AG04450 (cell line): ENCODE measurements at regions of chr9 and their contacts with region 1.

Region 1: GRCh38 chr9:124537926-124538325 is 30.7 kb upstream of the NR5A1 start:
- DNase-seq: no peak
- H3K4me3 ChIP-seq: no peak overlapping the region
- H3K27ac ChIP-seq: no peak overlapping the region
- H3K27me3 ChIP-seq: peaks cover 10% of the 10 kb centered on the region
- CTCF ChIP-seq: no peak

Region 2: GRCh38 chr9:124415102-124415851 is 122.6 kb before region 1 on chr9 and contains the start of gene PSMB7:
- CTCF ChIA-PET with region 1: interaction called, 139 read pairs
- POLR2A ChIA-PET with region 1: interaction called, 8 read pairs
- DNase-seq: peak; percentile 91
- H3K4me3 ChIP-seq: peak within 1 kb of the TSS; percentile 97
- H3K27ac ChIP-seq: peak within 1 kb of the TSS; percentile 69
- H3K27me3 ChIP-seq: no peaks in the 10 kb centered on the region
- CTCF ChIP-seq: peak; percentile 83
- polyA plus RNA-seq, gene PSMB7: 382 and 396 TPM in 2 replicates

Region 3: GRCh38 chr9:124420991-124421543 is 116.9 kb before region 1 on chr9:
- CTCF ChIA-PET with region 1: interaction called, 139 read pairs
- POLR2A ChIA-PET with region 1: no interaction called
- DNase-seq: no peak
- H3K4me3 ChIP-seq: no peak overlapping the region
- H3K27ac ChIP-seq: no peak overlapping the region
- H3K27me3 ChIP-seq: peaks cover 8% of the 10 kb centered on the region
- CTCF ChIP-seq: no peak

Region 4: DNA sequence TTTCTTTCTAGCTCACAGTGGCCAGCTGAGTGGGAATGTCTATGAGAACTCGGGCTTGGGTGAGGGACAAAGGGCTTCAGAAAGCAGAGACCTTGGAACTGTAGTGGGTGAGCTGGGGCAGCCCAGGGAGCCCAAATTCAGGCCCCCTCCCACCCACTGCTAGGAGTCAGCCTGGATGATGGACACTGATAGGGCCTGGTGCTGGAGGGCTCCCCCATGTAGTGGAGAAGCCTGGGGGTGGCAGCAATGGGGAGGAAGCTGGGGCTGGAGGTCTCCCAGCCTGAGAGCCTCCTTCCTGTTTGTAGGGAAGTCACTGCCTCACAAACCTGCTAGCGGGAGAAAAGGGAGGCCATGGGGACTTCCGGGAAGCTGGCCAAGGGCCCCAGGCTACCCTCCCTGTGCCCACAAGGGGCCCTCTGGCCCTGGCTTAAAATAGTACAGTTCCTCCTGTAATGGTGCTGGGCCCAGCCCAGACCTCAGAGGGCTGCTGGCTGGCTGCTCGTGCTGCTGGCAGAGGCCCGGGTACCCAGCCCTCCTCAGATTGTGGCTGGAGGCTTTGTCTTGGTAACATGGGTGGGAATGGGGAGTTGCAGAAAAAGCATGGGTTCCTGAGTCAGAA is 24.4 kb before region 1 on chr9:
- CTCF ChIA-PET with region 1: interaction called, 11 read pairs
- POLR2A ChIA-PET with region 1: no interaction called
- DNase-seq: no peak
- H3K4me3 ChIP-seq: no peak overlapping the region
- H3K27ac ChIP-seq: no peak overlapping the region
- H3K27me3 ChIP-seq: peaks cover 48% of the 10 kb centered on the region
- CTCF ChIP-seq: no peak

Region 5: DNA sequence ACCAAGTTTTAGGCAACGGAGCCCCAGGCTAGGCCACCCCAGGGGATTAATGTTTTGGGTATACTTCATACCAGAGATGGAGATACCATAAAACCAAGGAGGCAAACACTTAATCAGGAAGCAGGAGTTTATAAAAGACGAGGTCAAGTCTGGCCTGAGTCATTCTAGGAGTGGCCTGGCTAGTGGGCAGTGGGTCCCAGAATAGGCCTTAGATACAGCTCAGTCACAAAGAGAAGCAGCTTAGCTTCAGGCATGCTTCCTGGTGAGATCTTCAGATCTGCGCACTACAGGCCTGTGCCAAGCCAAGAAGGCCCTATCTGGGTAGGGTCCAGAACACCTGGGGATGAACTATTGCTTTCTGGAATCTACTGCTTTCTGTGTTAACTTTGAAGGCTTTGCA is 10.1 kb before region 1 on chr9:
- CTCF ChIA-PET with region 1: interaction called, 87 read pairs
- POLR2A ChIA-PET with region 1: no interaction called
- DNase-seq: no peak
- H3K4me3 ChIP-seq: no peak overlapping the region
- H3K27ac ChIP-seq: no peak overlapping the region
- H3K27me3 ChIP-seq: peaks cover 3% of the 10 kb centered on the region
- CTCF ChIP-seq: no peak

Region 6: DNA sequence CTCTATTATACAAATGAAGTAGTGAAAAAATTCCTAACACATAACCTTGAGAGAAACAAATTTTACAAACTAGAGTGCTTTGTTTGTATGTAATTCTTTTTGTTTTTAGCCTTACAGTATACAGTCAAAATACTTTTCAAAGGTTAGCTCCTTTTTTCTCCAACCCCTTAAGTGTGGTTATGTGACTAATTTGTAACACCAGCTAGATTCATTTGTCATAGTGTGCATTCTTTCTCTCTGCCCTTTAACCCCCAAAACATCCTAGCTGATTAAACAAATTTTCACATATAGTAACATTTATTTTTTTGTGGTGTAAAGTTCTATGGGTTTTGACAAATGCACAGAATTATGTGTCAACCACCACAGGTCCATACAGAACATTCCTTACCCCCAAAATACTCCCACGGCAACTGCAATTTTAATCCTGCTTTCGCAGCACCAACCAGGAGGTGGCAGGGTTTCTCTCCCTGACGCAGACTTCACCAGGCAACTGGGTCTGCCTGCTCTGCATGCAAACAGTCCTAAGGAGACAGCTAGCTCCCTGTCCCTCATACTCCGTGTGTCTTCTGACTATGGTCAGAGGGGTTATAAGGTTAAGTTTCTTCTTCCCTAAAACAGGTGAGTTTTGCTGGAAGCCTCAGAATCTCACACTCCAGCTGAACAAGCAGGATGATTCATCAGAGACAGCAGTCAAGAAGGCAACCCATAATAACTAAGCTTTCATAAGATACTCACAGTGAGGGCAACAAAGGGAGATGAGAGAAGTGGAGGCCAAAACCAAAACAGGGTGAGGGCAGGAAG is 13.7 kb after region 1 on chr9:
- CTCF ChIA-PET with region 1: interaction called, 42 read pairs
- POLR2A ChIA-PET with region 1: no interaction called
- DNase-seq: peak; percentile 34
- H3K4me3 ChIP-seq: no peak overlapping the region
- H3K27ac ChIP-seq: no peak overlapping the region
- H3K27me3 ChIP-seq: peaks cover 6% of the 10 kb centered on the region
- CTCF ChIP-seq: peak; percentile 87

Region 7: DNA sequence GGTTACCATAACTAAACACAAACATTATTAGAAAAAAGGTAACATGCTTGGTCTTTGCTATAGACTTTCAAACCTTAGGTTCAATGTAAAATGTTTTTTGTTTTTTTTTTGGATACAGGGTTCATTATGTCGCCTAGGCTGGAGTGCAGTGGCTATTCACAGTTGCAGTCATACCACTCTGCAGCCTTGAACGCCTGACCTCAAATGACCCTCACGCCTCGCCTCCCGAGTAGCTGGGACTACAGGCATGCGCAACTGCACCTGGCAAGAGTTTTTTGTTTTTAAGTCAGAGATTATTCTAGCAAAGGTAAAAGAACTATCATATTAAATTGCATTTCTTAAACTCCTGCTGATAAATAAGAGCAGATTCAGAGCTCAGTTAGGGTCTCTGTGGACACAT is 24.4 kb after region 1 on chr9:
- CTCF ChIA-PET with region 1: interaction called, 17 read pairs
- POLR2A ChIA-PET with region 1: no interaction called
- DNase-seq: no peak
- H3K4me3 ChIP-seq: no peak overlapping the region
- H3K27ac ChIP-seq: no peak overlapping the region
- H3K27me3 ChIP-seq: no peaks in the 10 kb centered on the region
- CTCF ChIP-seq: no peak